ENCODE measurements at regions of chr1 and their contacts with region 1.

Region 1: DNA sequence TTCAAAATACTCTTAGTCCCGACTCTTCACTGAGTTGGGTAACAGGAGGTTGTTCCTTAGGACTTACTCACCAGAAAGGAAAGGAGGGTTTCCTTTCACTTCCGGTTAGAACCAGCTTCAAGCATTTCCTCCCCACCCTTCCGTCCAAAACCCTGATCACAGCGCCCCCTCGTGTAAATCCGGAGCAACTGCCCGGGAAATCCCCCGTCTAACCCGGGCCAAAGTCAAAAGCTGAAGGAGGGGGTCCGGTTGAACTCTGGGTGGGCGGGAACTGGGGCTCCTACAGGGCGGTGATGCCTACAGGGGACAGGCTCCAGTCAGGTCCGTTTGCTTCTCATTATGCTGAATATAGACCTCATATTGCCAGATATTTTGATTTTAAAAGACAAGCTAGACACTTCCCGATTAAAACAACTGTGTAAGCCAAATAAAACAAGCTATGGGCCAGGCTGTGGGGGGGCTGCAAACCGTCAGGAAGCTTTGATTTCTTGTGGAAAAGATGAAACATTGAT is 15.0 kb upstream of the MTARC2 start:
- H3K4me3 ChIP-seq: no peak overlapping the region; the same call in 1 of the 2 replicates
- H3K27ac ChIP-seq: no peak overlapping the region
- H3K4me1 ChIP-seq: no peaks in the 10 kb centered on the region
- CTCF ChIP-seq: 0 out of 2 replicates have a peak, but pooled peaks have one; percentile 46

Region 2: GRCh38 chr1:220217383-220217988 is 515.7 kb before region 1 on chr1:
- CTCF ChIA-PET with region 1: interaction called, 16 read pairs
- POLR2A ChIA-PET with region 1: no interaction called
- H3K4me3 ChIP-seq: no peak overlapping the region
- H3K27ac ChIP-seq: no peak overlapping the region
- H3K4me1 ChIP-seq: peaks cover 9% of the 10 kb centered on the region; the same call in 1 of the 2 replicates
- CTCF ChIP-seq: no peak

Region 3: GRCh38 chr1:220281159-220281574 is 452.0 kb before region 1 on chr1:
- CTCF ChIA-PET with region 1: interaction called, 21 read pairs
- POLR2A ChIA-PET with region 1: interaction called, 3 read pairs
- H3K4me3 ChIP-seq: no peak overlapping the region
- H3K27ac ChIP-seq: no peak overlapping the region
- H3K4me1 ChIP-seq: no peaks in the 10 kb centered on the region
- CTCF ChIP-seq: peak; percentile 74

Region 4: GRCh38 chr1:220680085-220680687 is 53.0 kb before region 1 on chr1:
- CTCF ChIA-PET with region 1: interaction called, 21 read pairs
- POLR2A ChIA-PET with region 1: no interaction called
- H3K4me3 ChIP-seq: no peak overlapping the region
- H3K27ac ChIP-seq: no peak overlapping the region
- H3K4me1 ChIP-seq: no peaks in the 10 kb centered on the region
- CTCF ChIP-seq: no peak

Region 5: DNA sequence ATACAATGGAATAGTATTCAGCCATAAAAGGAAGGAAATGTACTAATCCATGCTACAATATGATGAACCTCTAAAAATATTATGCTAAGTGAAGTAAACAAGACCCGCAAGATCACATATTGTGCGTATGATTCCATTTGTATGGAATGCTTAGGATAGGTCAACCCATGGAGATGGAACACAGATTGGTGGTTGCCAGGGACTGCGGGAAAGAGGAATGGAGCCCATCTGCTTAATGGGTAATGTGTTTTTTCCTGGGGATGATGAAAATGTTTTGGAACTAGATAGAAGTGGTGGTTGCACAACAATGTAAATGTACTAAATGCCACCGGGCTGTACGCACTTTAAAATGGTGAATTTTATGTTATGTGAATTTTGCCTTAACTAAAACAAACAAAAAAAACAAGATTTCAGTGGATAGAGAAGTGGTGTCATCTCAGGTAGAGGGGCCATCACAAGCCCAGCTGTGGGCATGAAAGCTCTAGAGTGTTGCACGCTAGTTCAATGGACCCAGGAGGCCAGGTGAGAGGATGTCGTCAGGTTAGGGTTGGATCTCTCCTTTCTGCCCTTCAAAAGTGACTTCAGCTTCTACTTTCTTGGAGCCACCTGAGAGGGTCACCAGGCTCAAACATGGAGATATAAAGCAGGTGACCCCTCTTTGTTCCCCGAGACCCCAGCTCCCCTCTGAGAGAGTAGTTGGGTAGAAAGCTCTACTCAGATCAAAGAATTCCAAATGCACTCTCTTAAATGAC is 40.5 kb before region 1 on chr1:
- CTCF ChIA-PET with region 1: interaction called, 12 read pairs
- POLR2A ChIA-PET with region 1: no interaction called
- H3K4me3 ChIP-seq: no peak overlapping the region
- H3K27ac ChIP-seq: no peak overlapping the region
- H3K4me1 ChIP-seq: peaks cover 2% of the 10 kb centered on the region; the same call in 1 of the 2 replicates
- CTCF ChIP-seq: no peak

Region 6: GRCh38 chr1:220748089-220748934 is 15.2 kb after region 1 on chr1 and contains the start of gene MTARC2:
- CTCF ChIA-PET with region 1: interaction called, 32 read pairs
- POLR2A ChIA-PET with region 1: interaction called, 19 read pairs
- H3K4me3 ChIP-seq: peak within 1 kb of the TSS; percentile 71
- H3K27ac ChIP-seq: peak within 1 kb of the TSS; percentile 86
- H3K4me1 ChIP-seq: 0 out of 2 replicates have a peak, but pooled peaks cover 10% of the 10 kb centered on the region
- CTCF ChIP-seq: no peak

Region 7: DNA sequence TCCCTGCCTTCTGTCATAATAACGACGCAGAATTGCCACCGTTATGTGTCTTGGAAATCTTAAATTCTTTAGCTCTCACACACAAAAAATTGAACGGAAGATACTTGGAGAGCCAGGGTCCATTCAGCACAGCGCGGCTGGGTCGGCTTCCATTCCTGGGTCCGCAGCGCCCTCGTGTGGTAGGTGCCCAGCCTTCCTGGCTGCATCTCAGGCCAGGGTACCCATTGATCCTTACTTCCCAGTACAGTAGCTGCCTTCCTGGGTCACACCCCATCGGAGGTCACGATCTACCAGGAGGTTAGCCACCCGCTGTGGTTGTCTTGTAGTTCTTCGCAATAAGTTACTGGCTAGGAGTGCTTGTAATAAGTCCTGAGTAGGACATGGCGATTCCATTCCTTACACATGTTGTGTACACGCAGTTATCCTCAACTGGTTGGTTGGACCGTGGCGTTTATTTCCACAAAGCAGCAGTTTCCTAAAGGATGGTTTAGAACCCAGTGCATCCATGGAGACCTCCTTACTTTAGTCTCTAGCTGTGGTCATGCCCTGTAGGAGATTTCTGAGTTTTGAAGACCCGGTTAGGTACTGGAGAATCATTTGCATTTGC is 43.7 kb after region 1 on chr1:
- CTCF ChIA-PET with region 1: interaction called, 29 read pairs
- POLR2A ChIA-PET with region 1: no interaction called
- H3K4me3 ChIP-seq: no peak overlapping the region
- H3K27ac ChIP-seq: no peak overlapping the region
- H3K4me1 ChIP-seq: no peaks in the 10 kb centered on the region
- CTCF ChIP-seq: peak; percentile 70

Measured in HEK293 (cell line).